ENCODE measurements at regions of chr2 and their contacts with region 1.

Region 1: GRCh38 chr2:159620796-159621195 is 4.4 kb upstream of the BAZ2B start:
- DNase-seq: no peak
- H3K4me3 ChIP-seq: no peak overlapping the region
- H3K27ac ChIP-seq: no peak overlapping the region
- H3K4me1 ChIP-seq: peaks cover 9 to 11% of the 10 kb centered on the region in 2 donors
- H3K27me3 ChIP-seq: no peaks in the 10 kb centered on the region
- CTCF ChIP-seq: no peak
- POLR2A ChIP-seq: no peak

Region 2: DNA sequence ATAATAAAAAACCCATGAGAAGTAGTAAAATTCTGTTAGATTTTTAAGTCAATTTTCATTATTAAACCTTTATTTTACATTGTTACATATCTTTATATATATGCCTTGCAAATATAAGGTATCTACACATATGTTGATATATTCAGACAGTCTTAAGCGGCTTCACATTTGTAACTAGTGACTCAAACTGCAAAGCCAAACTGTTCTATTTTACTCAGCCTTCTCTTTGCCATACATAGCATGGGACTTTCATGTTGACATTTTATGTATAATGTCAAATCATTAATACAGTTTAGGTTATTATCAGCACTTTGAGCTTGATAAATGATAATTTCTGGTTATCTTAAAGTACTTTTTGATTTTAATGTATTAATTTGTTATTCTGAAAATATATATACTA is 209.3 kb before region 1 on chr2:
- intact Hi-C with region 1: no loop called
- DNase-seq: no peak
- H3K4me3 ChIP-seq: no peak overlapping the region
- H3K27ac ChIP-seq: no peak overlapping the region
- H3K4me1 ChIP-seq: no peaks in the 10 kb centered on the region
- H3K27me3 ChIP-seq: no peaks in the 10 kb centered on the region
- CTCF ChIP-seq: no peak
- POLR2A ChIP-seq: no peak

Region 3: DNA sequence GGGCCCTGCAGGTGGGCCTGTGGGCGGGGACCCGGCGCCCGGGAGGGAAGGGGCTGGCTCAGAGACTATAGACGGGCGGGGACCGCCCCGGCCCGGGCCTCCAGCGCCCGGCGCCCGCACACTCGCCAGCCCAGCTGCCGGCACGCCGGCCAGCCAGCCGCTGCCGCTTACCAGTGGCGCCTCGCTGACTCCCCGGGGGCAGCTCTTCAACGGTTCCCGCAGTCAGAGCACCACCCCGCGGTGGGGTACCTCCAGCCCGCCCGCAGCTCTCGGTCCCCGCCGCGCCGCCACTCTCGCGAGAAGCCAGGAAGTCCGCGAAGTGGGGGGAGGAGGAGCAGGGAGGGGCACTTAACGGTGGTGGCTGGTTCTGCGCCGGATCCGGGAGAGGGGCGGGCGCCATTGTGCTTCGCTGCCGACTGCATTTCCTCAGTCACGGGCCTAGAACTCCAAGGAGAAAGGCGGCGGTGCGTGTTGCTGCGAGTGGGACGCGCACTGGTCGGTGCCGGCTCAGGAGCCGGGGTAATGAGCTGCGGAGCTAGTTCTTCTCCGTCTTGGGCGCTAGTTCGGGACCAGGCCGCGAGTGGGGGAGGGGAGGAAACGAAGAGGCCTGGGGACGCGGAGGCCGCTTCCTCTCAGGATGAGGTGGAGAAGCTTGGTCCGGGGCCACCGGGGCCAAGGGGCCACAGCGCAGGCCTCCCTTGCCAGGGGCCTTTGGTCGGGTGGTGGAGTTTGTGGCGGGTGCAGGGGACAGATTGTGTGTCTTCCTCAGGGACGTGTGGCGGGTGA is 91.5 kb after region 1 on chr2 and contains the start of gene MARCHF7:
- intact Hi-C with region 1: loop called (anchors 10 kb)
- DNase-seq: peak; percentile 95 to 97
- H3K4me3 ChIP-seq: peak within 1 kb of the TSS; percentile 90 to 99 (median 99)
- H3K27ac ChIP-seq: peak within 1 kb of the TSS; percentile 99
- H3K4me1 ChIP-seq: peaks cover 24 to 32% of the 10 kb centered on the region in 2 donors
- H3K27me3 ChIP-seq: no peaks in the 10 kb centered on the region
- CTCF ChIP-seq: peak in 5 of 6 experiments; percentile 19 to 68 (median 48)
- POLR2A ChIP-seq: peak; percentile 74 to 95
- total RNA-seq, gene MARCHF7: 105 to 203 (median 132) TPM